A549 (cell line): ENCODE measurements at regions of chr6 and their contacts with region 1.

Region 1: DNA sequence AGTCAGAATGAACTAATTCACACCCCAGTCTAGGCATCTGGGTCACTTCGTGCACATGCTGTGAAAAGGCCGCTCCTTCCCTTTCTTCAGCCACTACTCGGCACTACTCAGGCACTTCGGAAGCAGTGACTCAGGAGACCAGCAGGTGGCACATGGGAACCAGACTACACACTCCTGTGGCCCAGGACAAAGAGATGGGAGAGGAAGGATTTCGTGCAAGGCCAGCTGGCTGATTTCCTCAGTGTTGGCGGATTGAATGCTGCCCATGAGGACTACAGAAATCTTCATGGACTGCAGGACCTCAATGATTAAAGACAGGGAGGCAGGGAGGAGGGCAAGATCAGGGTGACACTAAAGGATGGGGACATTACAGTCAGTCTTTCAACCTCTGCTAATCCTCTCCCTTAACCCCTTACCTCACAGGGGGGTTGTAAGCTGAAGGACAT is 117.8 kb upstream of the SPACA1 start:
- DNase-seq: peak; percentile 74 to 75
- ATAC-seq: peak; percentile 100
- H3K4me3 ChIP-seq: no peak overlapping the region
- H3K27ac ChIP-seq: peak overlapping the region; percentile 16 to 73; a peak in 4 of 6 replicates
- H3K4me1 ChIP-seq: peaks cover 3% of the 10 kb centered on the region; the same call in 1 of the 3 replicates
- CTCF ChIP-seq: peak; percentile 68
- EP300 ChIP-seq: no peak
- POLR2A ChIP-seq: no peak
- RAD21 ChIP-seq: peak; percentile 84 to 91

Region 2: DNA sequence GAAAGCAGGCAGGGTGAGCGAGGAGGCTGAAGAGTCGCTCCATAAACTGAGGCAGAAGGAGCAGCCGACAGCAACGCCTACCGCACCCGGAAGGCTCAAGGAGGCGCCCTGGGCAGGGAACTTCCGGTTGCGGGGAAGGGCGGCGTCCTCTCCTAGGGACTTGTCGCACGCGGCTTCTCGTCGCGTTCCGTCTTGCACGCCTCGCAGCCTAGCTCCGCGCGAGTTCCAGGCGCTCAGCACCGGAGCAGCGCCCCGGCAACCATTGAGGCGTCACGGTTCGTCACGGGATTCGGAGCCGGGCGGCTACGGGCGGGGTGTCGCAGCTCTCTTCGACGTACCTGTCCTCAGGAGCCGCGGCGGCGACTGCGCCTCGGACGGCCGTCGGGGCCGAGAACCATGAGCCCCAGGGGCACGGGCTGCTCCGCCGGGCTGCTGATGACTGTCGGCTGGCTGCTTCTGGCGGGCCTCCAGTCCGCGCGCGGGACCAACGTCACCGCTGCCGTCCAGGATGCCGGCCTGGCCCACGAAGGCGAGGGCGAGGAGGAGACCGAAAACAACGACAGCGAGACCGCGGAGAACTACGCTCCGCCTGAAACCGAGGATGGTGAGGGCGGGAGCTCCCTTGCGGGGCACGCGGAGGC is 117.8 kb after region 1 on chr6 and contains the start of gene SPACA1:
- CTCF ChIA-PET with region 1: no interaction called
- POLR2A ChIA-PET with region 1: no interaction called
- DNase-seq: no peak
- ATAC-seq: no peak
- H3K4me3 ChIP-seq: no peak within 1 kb of the TSS
- H3K27ac ChIP-seq: no peak within 1 kb of the TSS
- H3K4me1 ChIP-seq: no peaks in the 10 kb centered on the region
- CTCF ChIP-seq: no peak
- EP300 ChIP-seq: no peak
- POLR2A ChIP-seq: no peak
- RAD21 ChIP-seq: no peak
- polyA plus RNA-seq, gene SPACA1: not detected in 2 replicates

Region 3: GRCh38 chr6:88492824-88493223 is 563.0 kb after region 1 on chr6:
- CTCF ChIA-PET with region 1: interaction called, 14 read pairs
- POLR2A ChIA-PET with region 1: no interaction called
- DNase-seq: peak; percentile 13 to 41
- ATAC-seq: 0 out of 6 replicates have a peak, but pooled peaks of 1 of the 2 experiments have one; percentile 47
- H3K4me3 ChIP-seq: no peak overlapping the region
- H3K27ac ChIP-seq: 0 out of 6 replicates have a peak overlapping the region, but pooled peaks of 1 of the 2 experiments have one; percentile 24
- H3K4me1 ChIP-seq: no peaks in the 10 kb centered on the region
- CTCF ChIP-seq: peak; percentile 57
- EP300 ChIP-seq: no peak
- POLR2A ChIP-seq: no peak
- RAD21 ChIP-seq: peak; percentile 65 to 72

Region 4: DNA sequence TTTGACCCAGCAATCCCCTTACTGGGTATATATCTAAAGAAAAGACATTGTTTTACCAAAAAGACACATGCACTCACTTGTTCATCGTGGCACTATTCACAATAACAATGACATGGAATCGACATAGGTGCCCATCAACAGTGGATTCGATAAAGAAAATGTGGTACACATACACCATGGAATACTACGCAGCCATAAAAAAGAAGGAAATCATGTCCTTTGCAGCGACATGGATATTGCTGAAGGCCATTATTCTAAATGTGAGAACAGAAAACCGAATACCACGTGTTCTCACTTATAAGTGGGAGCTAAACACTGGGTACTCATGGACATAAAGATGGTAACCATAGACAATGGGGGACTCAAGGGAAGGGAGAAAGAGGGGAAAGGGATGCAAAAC is 811.2 kb after region 1 on chr6:
- CTCF ChIA-PET with region 1: no interaction called
- POLR2A ChIA-PET with region 1: no interaction called
- DNase-seq: no peak
- ATAC-seq: no peak
- H3K4me3 ChIP-seq: no peak overlapping the region
- H3K27ac ChIP-seq: no peak overlapping the region
- H3K4me1 ChIP-seq: no peaks in the 10 kb centered on the region
- CTCF ChIP-seq: no peak
- EP300 ChIP-seq: no peak
- POLR2A ChIP-seq: no peak
- RAD21 ChIP-seq: no peak